SK-N-SH (cell line): ENCODE measurements at regions of chr17 and their contacts with region 1.

Region 1: GRCh38 chr17:49434821-49435670 is 20.4 kb upstream of the PHB1 start:
- DNase-seq: peak; percentile 92
- H3K4me3 ChIP-seq: no peak overlapping the region
- H3K27ac ChIP-seq: peak overlapping the region in 1 of 2 experiments; percentile 81; a peak in 2 of 4 replicates
- H3K4me1 ChIP-seq: peaks cover 3 to 39% of the 10 kb centered on the region in 2 experiments; a peak in 2 of 4 replicates
- H3K27me3 ChIP-seq: peaks cover 16% of the 10 kb centered on the region; the same call in 1 of the 2 replicates
- CTCF ChIP-seq: peak; percentile 77
- EP300 ChIP-seq: no peak
- RAD21 ChIP-seq: peak; percentile 86

Region 2: DNA sequence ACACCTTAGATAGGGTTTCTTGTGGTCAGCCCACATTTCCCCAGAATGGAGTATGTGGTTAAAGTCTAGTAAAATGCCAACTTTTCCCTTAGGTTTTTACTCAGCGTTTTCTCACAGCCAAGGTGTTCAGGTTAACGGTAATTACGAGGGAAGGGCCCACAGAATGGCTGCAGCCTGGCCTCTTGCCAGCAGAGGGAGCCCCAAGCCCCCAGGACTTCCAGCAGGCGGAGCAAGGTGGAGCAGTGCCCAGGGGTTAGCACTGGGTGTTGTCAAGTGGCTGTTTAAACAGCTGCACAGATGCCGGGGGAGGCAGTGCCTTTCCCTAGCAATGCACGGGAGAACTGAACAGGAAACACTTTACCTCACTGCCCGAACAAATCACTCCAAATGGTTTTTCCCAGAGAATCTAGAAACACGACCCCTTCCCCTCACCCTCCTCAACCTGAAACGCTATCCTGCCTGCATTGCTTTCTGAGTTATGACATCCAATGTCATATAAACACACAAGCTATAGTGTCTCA is 27.0 kb before region 1 on chr17:
- CTCF ChIA-PET with region 1: interaction called, 64 read pairs
- POLR2A ChIA-PET with region 1: no interaction called
- DNase-seq: peak; percentile 92
- H3K4me3 ChIP-seq: peak overlapping the region in 1 of 2 experiments; percentile 27; a peak in 1 of 4 replicates
- H3K27ac ChIP-seq: no peak overlapping the region
- H3K4me1 ChIP-seq: peaks cover 0 to 4% of the 10 kb centered on the region in 2 experiments; a peak in 1 of 4 replicates
- H3K27me3 ChIP-seq: no peaks in the 10 kb centered on the region
- CTCF ChIP-seq: peak; percentile 100
- EP300 ChIP-seq: no peak
- RAD21 ChIP-seq: peak; percentile 86

Region 3: GRCh38 chr17:49456183-49456965 is 21.3 kb after region 1 on chr17:
- CTCF ChIA-PET with region 1: interaction called, 96 read pairs
- POLR2A ChIA-PET with region 1: no interaction called
- DNase-seq: no peak
- H3K4me3 ChIP-seq: no peak overlapping the region
- H3K27ac ChIP-seq: peak overlapping the region in 1 of 2 experiments; percentile 30; a peak in 1 of 4 replicates
- H3K4me1 ChIP-seq: peaks cover 18% of the 10 kb centered on the region in 2 experiments; a peak in 3 of 4 replicates
- H3K27me3 ChIP-seq: peaks cover 21% of the 10 kb centered on the region
- CTCF ChIP-seq: no peak
- EP300 ChIP-seq: peak in 1 of 2 experiments; percentile 33; a peak in 1 of 4 replicates
- RAD21 ChIP-seq: peak; percentile 2; the same call in 1 of the 2 replicates

Region 4: GRCh38 chr17:49477709-49478108 is 42.7 kb after region 1 on chr17:
- CTCF ChIA-PET with region 1: interaction called, 53 read pairs
- POLR2A ChIA-PET with region 1: interaction called, 3 read pairs
- DNase-seq: no peak
- H3K4me3 ChIP-seq: no peak overlapping the region
- H3K27ac ChIP-seq: no peak overlapping the region
- H3K4me1 ChIP-seq: peaks cover 0 to 34% of the 10 kb centered on the region in 2 experiments; a peak in 1 of 4 replicates
- H3K27me3 ChIP-seq: peaks cover 74% of the 10 kb centered on the region
- CTCF ChIP-seq: no peak
- EP300 ChIP-seq: no peak
- RAD21 ChIP-seq: no peak

Region 5: GRCh38 chr17:49508061-49508865 is 73.2 kb after region 1 on chr17:
- CTCF ChIA-PET with region 1: interaction called, 38 read pairs
- POLR2A ChIA-PET with region 1: no interaction called
- DNase-seq: peak; percentile 59
- H3K4me3 ChIP-seq: no peak overlapping the region
- H3K27ac ChIP-seq: peak overlapping the region in 1 of 2 experiments; percentile 82; a peak in 1 of 4 replicates
- H3K4me1 ChIP-seq: peaks cover 4 to 57% of the 10 kb centered on the region in 2 experiments; a peak in 1 of 4 replicates
- H3K27me3 ChIP-seq: peaks cover 25% of the 10 kb centered on the region
- CTCF ChIP-seq: no peak
- EP300 ChIP-seq: no peak
- RAD21 ChIP-seq: no peak

Region 6: GRCh38 chr17:49548506-49549310 is 113.7 kb after region 1 on chr17:
- CTCF ChIA-PET with region 1: interaction called, 51 read pairs
- POLR2A ChIA-PET with region 1: no interaction called
- DNase-seq: peak; percentile 73
- H3K4me3 ChIP-seq: no peak overlapping the region; a peak in 1 of 4 replicates
- H3K27ac ChIP-seq: peak overlapping the region in 1 of 2 experiments; percentile 30; a peak in 1 of 4 replicates
- H3K4me1 ChIP-seq: peaks cover 0 to 43% of the 10 kb centered on the region in 2 experiments; a peak in 1 of 4 replicates
- H3K27me3 ChIP-seq: peaks cover 8% of the 10 kb centered on the region
- CTCF ChIP-seq: peak; percentile 68
- EP300 ChIP-seq: no peak
- RAD21 ChIP-seq: peak; percentile 81